ENCODE measurements at regions of chr6 and their contacts with region 1.

Region 1: GRCh38 chr6:123715006-123715875 is 78.5 kb upstream of the TRDN start:
- DNase-seq: no peak
- H3K4me3 ChIP-seq: no peak overlapping the region
- H3K27ac ChIP-seq: no peak overlapping the region
- H3K4me1 ChIP-seq: no peaks in the 10 kb centered on the region
- H3K27me3 ChIP-seq: no peaks in the 10 kb centered on the region
- CTCF ChIP-seq: peak; percentile 18 to 46 (median 35)

Region 2: DNA sequence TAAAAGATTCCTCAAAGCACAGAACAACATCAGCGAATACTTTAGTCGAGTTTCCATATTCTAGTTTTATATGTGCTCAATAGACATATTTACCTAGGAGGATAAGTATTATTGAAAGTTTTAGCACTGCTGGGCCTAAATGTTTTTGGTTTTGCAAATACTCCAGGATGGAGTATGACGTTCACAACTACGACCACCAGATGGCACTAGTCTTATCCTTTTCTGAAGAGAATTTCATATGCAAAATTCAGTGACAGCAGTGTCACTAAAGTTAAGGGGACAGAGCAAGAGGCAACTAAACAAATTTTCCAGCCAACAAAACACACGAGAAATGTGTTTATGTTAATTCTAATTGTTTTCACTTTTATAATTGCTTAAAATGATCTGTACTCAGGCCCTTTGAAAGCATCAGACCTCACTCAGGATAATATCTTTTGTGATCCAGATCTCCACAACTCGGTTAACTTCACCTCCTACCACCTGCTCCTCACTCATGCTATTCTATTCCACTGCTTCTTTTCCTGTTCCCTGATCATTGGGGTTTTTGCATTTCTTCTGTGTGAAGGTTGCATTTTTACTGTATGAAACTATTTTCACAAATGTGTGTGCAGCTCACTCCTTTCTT is 299.3 kb before region 1 on chr6:
- intact Hi-C with region 1: loop called (anchors 1 kb)
- DNase-seq: peak in 1 of 2 donors; percentile 62
- H3K4me3 ChIP-seq: no peak overlapping the region
- H3K27ac ChIP-seq: no peak overlapping the region
- H3K4me1 ChIP-seq: no peaks in the 10 kb centered on the region
- H3K27me3 ChIP-seq: no peaks in the 10 kb centered on the region
- CTCF ChIP-seq: peak in 2 of 3 experiments; percentile 62 to 63

Region 3: GRCh38 chr6:123829302-123829953 is 114.2 kb after region 1 on chr6:
- intact Hi-C with region 1: no loop called
- DNase-seq: no peak
- H3K4me3 ChIP-seq: no peak overlapping the region
- H3K27ac ChIP-seq: no peak overlapping the region
- H3K4me1 ChIP-seq: no peaks in the 10 kb centered on the region
- H3K27me3 ChIP-seq: no peaks in the 10 kb centered on the region
- CTCF ChIP-seq: no peak

Region 4: GRCh38 chr6:123841067-123841896 is 126.0 kb after region 1 on chr6:
- intact Hi-C with region 1: no loop called
- DNase-seq: no peak
- H3K4me3 ChIP-seq: no peak overlapping the region
- H3K27ac ChIP-seq: no peak overlapping the region
- H3K4me1 ChIP-seq: no peaks in the 10 kb centered on the region
- H3K27me3 ChIP-seq: no peaks in the 10 kb centered on the region
- CTCF ChIP-seq: no peak

Measured in ascending aorta (tissue), 2 donors.